ENCODE measurements at regions of chr12 and their contacts with region 1.

Region 1: GRCh38 chr12:128823916-128824839 is at the start of gene SLC15A4:
- DNase-seq: peak; percentile 92 to 98
- H3K4me3 ChIP-seq: peak within 1 kb of the TSS; percentile 96
- H3K27ac ChIP-seq: peak within 1 kb of the TSS; percentile 89 to 90
- H3K4me1 ChIP-seq: peaks cover 0 to 25% of the 10 kb centered on the region in 2 donors
- H3K27me3 ChIP-seq: no peaks in the 10 kb centered on the region
- CTCF ChIP-seq: peak in 1 of 3 experiments; percentile 12
- total RNA-seq, gene SLC15A4: 39.3 TPM

Region 2: GRCh38 chr12:128783129-128783574 is 41.0 kb before region 1 on chr12:
- intact Hi-C with region 1: loop called (anchors 5 kb)
- DNase-seq: no peak
- H3K4me3 ChIP-seq: no peak overlapping the region
- H3K27ac ChIP-seq: no peak overlapping the region
- H3K4me1 ChIP-seq: no peaks in the 10 kb centered on the region
- H3K27me3 ChIP-seq: no peaks in the 10 kb centered on the region
- CTCF ChIP-seq: no peak

Region 3: GRCh38 chr12:128797119-128798118 is 26.8 kb before region 1 on chr12:
- intact Hi-C with region 1: loop called (anchors 2 kb)
- DNase-seq: peak in 1 of 2 donors; percentile 83
- H3K4me3 ChIP-seq: no peak overlapping the region
- H3K27ac ChIP-seq: peak overlapping the region in 1 of 2 donors; percentile 94
- H3K4me1 ChIP-seq: peaks cover 0 to 39% of the 10 kb centered on the region in 2 donors
- H3K27me3 ChIP-seq: no peaks in the 10 kb centered on the region
- CTCF ChIP-seq: no peak

Region 4: GRCh38 chr12:128920468-128920867 is 96.3 kb after region 1 on chr12:
- intact Hi-C with region 1: loop called (anchors 2 kb)
- DNase-seq: peak in 1 of 2 donors; percentile 88
- H3K4me3 ChIP-seq: peak overlapping the region in 1 of 2 donors; percentile 21
- H3K27ac ChIP-seq: peak overlapping the region; percentile 62 to 66
- H3K4me1 ChIP-seq: peaks cover 5 to 7% of the 10 kb centered on the region in 2 donors
- H3K27me3 ChIP-seq: no peaks in the 10 kb centered on the region
- CTCF ChIP-seq: no peak

Measured in ascending aorta (tissue), 2 donors.